ENCODE measurements at regions of chr6 and their contacts with region 1.

Region 1: GRCh38 chr6:153634416-153634815 is 404.6 kb upstream of the OPRM1 start:
- DNase-seq: no peak
- H3K4me3 Mint-ChIP-seq: no peak overlapping the region
- H3K27ac Mint-ChIP-seq: no peak overlapping the region
- H3K4me1 Mint-ChIP-seq: no peaks in the 10 kb centered on the region
- H3K27me3 Mint-ChIP-seq: no peaks in the 10 kb centered on the region

Region 2: DNA sequence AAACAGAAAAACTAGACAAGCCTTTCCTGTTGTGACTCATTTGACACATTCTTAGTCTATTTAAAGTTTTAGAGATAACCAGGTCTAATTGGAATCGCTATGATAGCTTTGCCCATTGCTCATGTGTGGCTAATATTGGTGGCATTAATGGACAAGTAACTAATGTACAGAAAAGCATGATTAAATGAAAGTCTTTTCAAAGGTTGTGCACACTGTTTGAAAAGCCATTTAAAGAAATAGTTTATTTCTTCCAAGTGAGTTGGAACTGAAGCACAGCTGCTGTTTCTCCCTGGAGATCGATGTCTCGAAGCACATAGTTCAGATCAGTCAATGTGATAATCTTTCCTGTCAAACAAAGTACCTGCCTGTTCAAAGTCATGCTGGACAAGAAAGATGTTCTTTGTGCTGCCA is 15.6 kb before region 1 on chr6:
- CTCF ChIA-PET with region 1: no interaction called
- POLR2A ChIA-PET with region 1: interaction called, 10 read pairs
- DNase-seq: no peak
- H3K4me3 Mint-ChIP-seq: no peak overlapping the region
- H3K27ac Mint-ChIP-seq: no peak overlapping the region
- H3K4me1 Mint-ChIP-seq: no peaks in the 10 kb centered on the region
- H3K27me3 Mint-ChIP-seq: no peaks in the 10 kb centered on the region

Region 3: GRCh38 chr6:153662982-153663381 is 28.6 kb after region 1 on chr6:
- CTCF ChIA-PET with region 1: no interaction called
- POLR2A ChIA-PET with region 1: no interaction called
- DNase-seq: no peak
- H3K4me3 Mint-ChIP-seq: no peak overlapping the region
- H3K27ac Mint-ChIP-seq: no peak overlapping the region
- H3K4me1 Mint-ChIP-seq: no peaks in the 10 kb centered on the region
- H3K27me3 Mint-ChIP-seq: no peaks in the 10 kb centered on the region